ENCODE measurements at regions of chr18 and their contacts with region 1.

Region 1: GRCh38 chr18:64037812-64038414 is 68.0 kb downstream of the SERPINB8 start:
- DNase-seq: no peak
- H3K4me3 Mint-ChIP-seq: no peak overlapping the region
- H3K27ac Mint-ChIP-seq: no peak overlapping the region
- H3K4me1 Mint-ChIP-seq: no peaks in the 10 kb centered on the region
- H3K27me3 Mint-ChIP-seq: peaks cover 10% of the 10 kb centered on the region

Region 2: GRCh38 chr18:65753520-65753919 is 1715.6 kb after region 1 on chr18:
- CTCF ChIA-PET with region 1: no interaction called
- intact Hi-C with region 1: loop called (anchors 10 kb)
- DNase-seq: no peak
- H3K4me3 Mint-ChIP-seq: no peak overlapping the region
- H3K27ac Mint-ChIP-seq: no peak overlapping the region
- H3K4me1 Mint-ChIP-seq: no peaks in the 10 kb centered on the region
- H3K27me3 Mint-ChIP-seq: peaks cover 21% of the 10 kb centered on the region

Region 3: GRCh38 chr18:65869527-65869926 is 1831.6 kb after region 1 on chr18:
- CTCF ChIA-PET with region 1: no interaction called
- intact Hi-C with region 1: no loop called
- DNase-seq: no peak
- H3K4me3 Mint-ChIP-seq: no peak overlapping the region
- H3K27ac Mint-ChIP-seq: no peak overlapping the region
- H3K4me1 Mint-ChIP-seq: no peaks in the 10 kb centered on the region
- H3K27me3 Mint-ChIP-seq: no peaks in the 10 kb centered on the region

Measured in activated naive CD4-positive, alpha-beta T cell treated with anti-CD3 and anti-CD28 coated beads for 36 hours (primary cell).